Left ventricle myocardium superior (tissue), 1 donor: ENCODE measurements at regions of chr5 and their contacts with region 1.

Region 1: GRCh38 chr5:170633235-170634081 is 129.6 kb downstream of the KCNIP1 start:
- DNase-seq: no peak
- ATAC-seq: peak; percentile 83

Region 2: DNA sequence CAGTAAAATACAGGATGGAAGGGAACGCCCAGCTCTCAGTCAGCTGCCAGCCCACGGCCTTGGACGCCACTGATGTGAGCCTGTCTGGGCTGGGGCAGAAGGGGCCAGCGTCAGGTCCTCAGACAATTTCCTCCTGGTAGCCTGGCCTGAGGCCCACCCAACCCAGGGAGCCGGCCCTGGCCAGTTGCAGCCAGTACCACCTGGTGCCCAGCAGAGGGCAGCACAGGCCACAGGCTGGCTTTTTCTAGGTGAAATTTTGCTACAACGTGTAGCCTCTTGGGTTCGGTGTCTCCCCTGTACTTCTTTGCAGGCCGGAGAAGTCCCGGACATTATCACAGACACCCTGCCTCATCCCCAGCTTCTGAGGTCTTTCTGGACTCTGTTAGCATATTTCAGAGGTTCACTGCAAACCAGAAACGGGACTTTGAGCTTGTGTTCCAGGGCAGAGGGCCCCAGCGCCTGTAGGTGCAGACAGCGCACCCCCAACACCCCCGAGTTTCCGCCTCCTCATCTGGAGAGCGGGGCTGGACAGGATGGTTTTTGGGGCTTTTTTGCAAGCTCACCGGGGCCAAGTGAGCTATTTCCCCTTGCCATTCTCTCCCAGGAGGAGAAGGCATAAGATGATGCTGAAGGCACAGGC is 198.4 kb before region 1 on chr5:
- intact Hi-C with region 1: loop called (anchors 2 kb)
- DNase-seq: peak; percentile 85
- ATAC-seq: peak; percentile 86